ENCODE measurements at regions of chr7 and their contacts with region 1.

Region 1: GRCh38 chr7:100469227-100470044 is 5.4 kb upstream of the SPACDR start:
- DNase-seq: peak; percentile 91
- ATAC-seq: peak; percentile 92
- H3K4me3 Mint-ChIP-seq: no peak overlapping the region
- H3K27ac Mint-ChIP-seq: no peak overlapping the region
- H3K4me1 Mint-ChIP-seq: peaks cover 31% of the 10 kb centered on the region
- H3K27me3 Mint-ChIP-seq: no peaks in the 10 kb centered on the region

Region 2: GRCh38 chr7:100137851-100138760 is 331.3 kb before region 1 on chr7:
- CTCF ChIA-PET with region 1: no interaction called
- POLR2A ChIA-PET with region 1: no interaction called
- intact Hi-C with region 1: no loop called
- DNase-seq: no peak
- ATAC-seq: peak; percentile 47
- H3K4me3 Mint-ChIP-seq: no peak overlapping the region
- H3K27ac Mint-ChIP-seq: peak overlapping the region; percentile 21
- H3K4me1 Mint-ChIP-seq: peaks cover 9% of the 10 kb centered on the region
- H3K27me3 Mint-ChIP-seq: no peaks in the 10 kb centered on the region

Region 3: DNA sequence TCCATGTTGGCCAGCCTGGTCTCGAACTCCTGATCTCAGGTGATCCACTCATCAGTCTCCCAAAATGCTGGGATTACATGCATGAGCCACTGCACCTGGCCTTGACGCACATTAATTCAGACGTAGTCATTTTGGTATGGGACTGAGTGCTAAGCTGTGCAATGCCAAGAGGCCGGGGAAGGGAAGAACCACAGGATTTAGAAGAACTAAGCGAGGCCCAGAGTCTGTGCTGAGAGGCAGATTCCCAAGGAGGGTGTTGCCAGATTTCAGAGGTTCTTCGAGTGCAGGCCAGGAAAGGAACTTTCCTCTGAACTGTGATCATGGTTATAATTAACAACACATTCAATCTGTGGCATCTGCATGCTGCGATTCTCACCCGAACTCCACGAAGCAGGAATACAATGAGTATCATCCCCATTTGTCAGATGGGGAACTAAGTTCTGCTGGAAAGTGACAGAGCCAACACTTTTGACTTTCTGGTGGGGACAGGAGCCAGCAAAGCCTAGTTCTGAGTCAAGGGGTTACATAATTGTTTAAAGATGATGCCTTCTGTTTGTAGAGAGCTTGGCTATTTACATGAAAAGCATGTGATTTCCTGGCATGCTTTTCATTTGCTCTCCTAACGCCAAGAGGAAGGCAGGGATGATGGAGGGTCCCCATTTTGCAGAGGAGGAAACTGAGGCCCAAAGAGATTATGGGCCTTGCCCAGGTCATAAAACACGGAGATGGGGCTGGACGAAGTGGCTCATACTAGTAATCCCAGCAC is 257.7 kb after region 1 on chr7:
- CTCF ChIA-PET with region 1: interaction called, 4 read pairs
- POLR2A ChIA-PET with region 1: no interaction called
- intact Hi-C with region 1: loop called in 1 of 2 experiments (anchors 1 kb)
- DNase-seq: no peak
- ATAC-seq: no peak
- H3K4me3 Mint-ChIP-seq: no peak overlapping the region
- H3K27ac Mint-ChIP-seq: no peak overlapping the region
- H3K4me1 Mint-ChIP-seq: peaks cover 3% of the 10 kb centered on the region
- H3K27me3 Mint-ChIP-seq: peaks cover 13% of the 10 kb centered on the region

Measured in activated CD4-positive, alpha-beta T cell treated with anti-CD3 and anti-CD28 coated beads for 36 hours (primary cell).